ENCODE measurements at regions of chr19 and their contacts with region 1.

Region 1: GRCh38 chr19:18251587-18252369 is 22.5 kb downstream of the IQCN start:
- DNase-seq: peak; percentile 75
- ATAC-seq: peak; percentile 68
- H3K4me3 Mint-ChIP-seq: no peak overlapping the region
- H3K27ac Mint-ChIP-seq: peak overlapping the region; percentile 47
- H3K4me1 Mint-ChIP-seq: peaks cover 33% of the 10 kb centered on the region
- H3K27me3 Mint-ChIP-seq: peaks cover 2% of the 10 kb centered on the region
- CTCF ChIP-seq: peak; percentile 69

Region 2: DNA sequence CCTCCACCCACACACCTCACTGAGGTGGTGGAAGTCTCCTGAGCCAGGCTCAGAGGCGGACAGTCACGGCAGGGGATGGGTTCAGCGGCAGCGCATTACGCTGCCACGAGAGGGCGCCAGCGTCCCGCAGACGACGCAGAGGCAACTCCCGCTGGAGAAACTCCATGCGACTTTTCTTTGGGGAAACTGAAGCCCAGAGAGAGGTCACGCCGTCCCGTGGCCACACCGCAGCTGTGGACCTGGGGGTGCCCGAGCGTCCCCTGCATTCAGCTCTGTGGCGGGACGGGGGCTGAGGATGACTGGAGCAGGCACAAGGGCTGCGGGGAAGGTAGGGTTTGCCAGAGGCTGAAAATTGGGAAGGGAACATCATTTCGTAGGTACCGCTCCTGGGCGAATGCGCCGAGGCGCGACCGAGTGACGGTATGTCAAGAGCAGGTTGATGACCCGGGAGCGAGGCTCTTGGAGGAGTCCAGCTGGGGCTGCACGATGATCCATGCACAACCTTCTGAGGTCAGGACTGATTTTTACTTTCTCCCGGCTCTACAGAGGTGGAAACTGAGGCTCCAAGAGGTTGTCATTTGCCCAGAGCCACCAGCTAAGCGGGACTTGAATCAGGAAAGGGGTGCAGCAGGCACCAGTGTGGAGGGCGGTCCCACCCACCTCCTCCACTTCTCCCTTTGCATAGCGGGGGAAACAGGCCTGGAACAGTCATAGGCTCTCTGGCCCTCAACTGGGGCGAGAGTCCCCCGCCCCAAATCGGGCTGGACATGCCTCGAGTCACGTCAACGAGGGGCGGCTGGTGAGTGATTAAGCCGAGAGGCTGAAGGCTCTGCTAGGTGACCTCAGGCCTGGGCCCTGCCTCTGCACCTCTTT is 244.5 kb before region 1 on chr19:
- CTCF ChIA-PET with region 1: interaction called, 3 read pairs
- POLR2A ChIA-PET with region 1: no interaction called
- intact Hi-C with region 1: loop called (anchors 1 kb)
- DNase-seq: peak; percentile 83
- ATAC-seq: peak; percentile 61
- H3K4me3 Mint-ChIP-seq: peak overlapping the region; percentile 93
- H3K27ac Mint-ChIP-seq: peak overlapping the region; percentile 92
- H3K4me1 Mint-ChIP-seq: peaks cover 40% of the 10 kb centered on the region
- H3K27me3 Mint-ChIP-seq: no peaks in the 10 kb centered on the region
- CTCF ChIP-seq: peak; percentile 84

Region 3: GRCh38 chr19:18109733-18110595 is 141.8 kb before region 1 on chr19:
- CTCF ChIA-PET with region 1: interaction called, 18 read pairs
- POLR2A ChIA-PET with region 1: no interaction called
- intact Hi-C with region 1: loop called (anchors 1 kb)
- DNase-seq: peak; percentile 62
- ATAC-seq: peak; percentile 57
- H3K4me3 Mint-ChIP-seq: peak overlapping the region; percentile 80
- H3K27ac Mint-ChIP-seq: peak overlapping the region; percentile 83
- H3K4me1 Mint-ChIP-seq: peaks cover 54% of the 10 kb centered on the region
- H3K27me3 Mint-ChIP-seq: no peaks in the 10 kb centered on the region
- CTCF ChIP-seq: no peak

Region 4: GRCh38 chr19:18160971-18161635 is 90.7 kb before region 1 on chr19:
- CTCF ChIA-PET with region 1: interaction called, 15 read pairs
- POLR2A ChIA-PET with region 1: interaction called, 5 read pairs
- intact Hi-C with region 1: loop called (anchors 1 kb)
- DNase-seq: peak; percentile 90
- ATAC-seq: peak; percentile 97
- H3K4me3 Mint-ChIP-seq: peak overlapping the region; percentile 24
- H3K27ac Mint-ChIP-seq: peak overlapping the region; percentile 18
- H3K4me1 Mint-ChIP-seq: peaks cover 16% of the 10 kb centered on the region
- H3K27me3 Mint-ChIP-seq: no peaks in the 10 kb centered on the region
- CTCF ChIP-seq: no peak

Region 5: DNA sequence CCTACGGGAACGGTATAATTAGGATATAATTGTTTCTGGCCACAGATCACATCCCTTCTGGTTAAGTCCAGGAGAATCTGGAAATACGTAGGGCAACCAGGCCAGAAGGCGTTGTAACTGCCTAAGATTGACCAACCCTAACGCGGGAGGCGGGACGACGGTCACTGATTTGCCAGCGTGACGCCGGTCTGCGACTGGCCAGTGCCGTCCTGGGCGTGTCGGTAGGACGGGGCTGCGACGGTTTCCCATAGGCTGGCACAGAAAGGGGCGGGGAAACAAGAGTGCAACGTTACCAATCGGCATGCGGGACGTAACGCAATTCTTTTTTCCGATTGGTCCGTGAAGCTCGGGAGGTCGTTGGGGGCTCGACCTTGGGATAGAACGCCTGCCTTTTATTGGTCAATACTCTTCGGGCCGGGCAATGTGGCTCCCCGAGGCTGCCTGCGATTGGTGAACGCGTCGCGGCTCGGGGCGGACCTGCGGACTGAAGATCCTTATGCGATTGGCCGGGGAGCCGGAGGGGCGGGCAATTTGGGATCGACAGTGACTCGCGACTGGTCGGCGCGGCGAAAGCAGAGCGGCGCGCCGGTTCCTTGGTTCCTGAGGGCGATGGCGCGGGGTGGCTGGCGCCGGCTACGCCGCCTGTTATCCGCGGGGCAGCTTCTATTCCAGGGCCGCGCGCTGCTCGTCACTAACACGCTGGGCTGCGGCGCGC is 58.9 kb before region 1 on chr19 and contains the start of gene MPV17L2:
- CTCF ChIA-PET with region 1: interaction called, 11 read pairs
- POLR2A ChIA-PET with region 1: interaction called, 15 read pairs
- intact Hi-C with region 1: loop called (anchors 1 kb)
- DNase-seq: peak; percentile 90
- ATAC-seq: peak; percentile 83
- H3K4me3 Mint-ChIP-seq: peak within 1 kb of the TSS; percentile 87
- H3K27ac Mint-ChIP-seq: peak within 1 kb of the TSS; percentile 95
- H3K4me1 Mint-ChIP-seq: peaks cover 40% of the 10 kb centered on the region
- H3K27me3 Mint-ChIP-seq: no peaks in the 10 kb centered on the region
- CTCF ChIP-seq: no peak
- total RNA-seq, gene MPV17L2: 17.3 and 17.9 TPM in 2 replicates